ENCODE measurements at regions of chr10 and their contacts with region 1.

Region 1: DNA sequence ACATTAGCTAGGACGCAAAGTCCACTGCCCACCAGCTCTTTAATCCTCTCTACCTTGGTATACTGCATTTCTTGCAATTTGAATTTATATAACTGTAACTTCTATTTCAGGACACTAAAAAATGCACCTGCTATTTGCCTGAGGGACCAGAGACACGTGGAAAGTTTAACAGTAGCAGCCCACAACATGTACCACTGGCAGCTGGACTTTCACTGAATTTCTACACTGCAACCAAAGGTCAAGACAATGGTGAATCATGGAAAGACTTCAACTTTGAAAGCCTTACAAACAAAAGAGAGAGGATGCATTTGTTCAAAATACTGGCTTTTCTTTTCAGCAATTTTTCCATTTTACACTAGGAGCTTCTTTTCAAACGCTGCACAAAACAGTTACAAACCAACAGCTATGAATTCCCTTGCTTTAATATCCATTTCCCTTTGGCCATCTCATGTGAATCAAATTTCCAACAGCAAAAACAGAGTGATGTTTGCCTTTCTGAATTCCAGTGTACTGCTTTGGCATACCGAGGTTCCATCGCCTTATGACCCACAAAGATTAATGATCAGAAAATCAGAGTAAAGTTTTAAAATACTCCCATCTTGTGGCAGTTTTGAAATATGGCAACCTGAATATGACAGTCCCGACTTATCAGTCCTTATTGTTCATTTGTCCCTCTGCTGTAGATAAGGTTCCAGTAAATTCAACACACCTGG is 29.9 kb upstream of the HNRNPH3 start:
- DNase-seq: peak; percentile 63
- H3K4me3 ChIP-seq: no peak overlapping the region
- H3K27ac ChIP-seq: no peak overlapping the region
- H3K4me1 ChIP-seq: peaks cover 3% of the 10 kb centered on the region
- H3K27me3 ChIP-seq: no peaks in the 10 kb centered on the region
- CTCF ChIP-seq: peak; percentile 26 to 36
- POLR2A ChIP-seq: no peak

Region 2: DNA sequence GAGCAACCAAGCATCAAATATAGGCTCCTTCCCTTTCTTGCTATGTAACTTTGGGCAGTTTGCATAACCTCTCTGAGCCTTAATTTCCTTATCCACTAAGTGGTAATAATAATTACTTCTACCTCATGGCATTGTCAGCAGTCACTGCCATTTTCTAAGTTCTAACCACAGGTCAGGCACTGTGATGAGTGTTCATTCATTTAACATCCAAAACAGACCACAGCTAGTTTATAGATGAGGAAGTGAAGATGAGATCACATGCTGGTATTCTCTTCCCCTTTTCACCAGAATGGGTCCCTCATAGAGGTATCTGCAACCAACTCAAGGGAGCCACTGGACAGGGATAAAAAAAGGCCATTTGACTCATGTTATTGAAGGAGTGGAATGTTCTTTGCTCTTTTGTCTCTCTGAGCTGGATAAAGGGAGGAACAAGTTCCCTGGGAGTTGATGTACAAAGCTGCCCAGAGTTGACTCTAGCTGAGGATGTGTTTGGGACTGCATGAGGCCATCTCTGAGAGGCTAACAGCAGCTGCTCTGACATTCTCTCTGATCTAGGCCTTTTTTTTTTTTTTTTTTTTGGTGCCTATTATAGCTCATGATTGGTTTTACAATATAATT is 528.9 kb before region 1 on chr10:
- CTCF ChIA-PET with region 1: no interaction called
- POLR2A ChIA-PET with region 1: no interaction called
- dilution Hi-C with region 1: no loop called
- intact Hi-C with region 1: no loop called
- DNase-seq: no peak
- H3K4me3 ChIP-seq: no peak overlapping the region
- H3K27ac ChIP-seq: no peak overlapping the region
- H3K4me1 ChIP-seq: peaks cover 29% of the 10 kb centered on the region
- H3K27me3 ChIP-seq: no peaks in the 10 kb centered on the region
- CTCF ChIP-seq: no peak
- POLR2A ChIP-seq: no peak

Region 3: DNA sequence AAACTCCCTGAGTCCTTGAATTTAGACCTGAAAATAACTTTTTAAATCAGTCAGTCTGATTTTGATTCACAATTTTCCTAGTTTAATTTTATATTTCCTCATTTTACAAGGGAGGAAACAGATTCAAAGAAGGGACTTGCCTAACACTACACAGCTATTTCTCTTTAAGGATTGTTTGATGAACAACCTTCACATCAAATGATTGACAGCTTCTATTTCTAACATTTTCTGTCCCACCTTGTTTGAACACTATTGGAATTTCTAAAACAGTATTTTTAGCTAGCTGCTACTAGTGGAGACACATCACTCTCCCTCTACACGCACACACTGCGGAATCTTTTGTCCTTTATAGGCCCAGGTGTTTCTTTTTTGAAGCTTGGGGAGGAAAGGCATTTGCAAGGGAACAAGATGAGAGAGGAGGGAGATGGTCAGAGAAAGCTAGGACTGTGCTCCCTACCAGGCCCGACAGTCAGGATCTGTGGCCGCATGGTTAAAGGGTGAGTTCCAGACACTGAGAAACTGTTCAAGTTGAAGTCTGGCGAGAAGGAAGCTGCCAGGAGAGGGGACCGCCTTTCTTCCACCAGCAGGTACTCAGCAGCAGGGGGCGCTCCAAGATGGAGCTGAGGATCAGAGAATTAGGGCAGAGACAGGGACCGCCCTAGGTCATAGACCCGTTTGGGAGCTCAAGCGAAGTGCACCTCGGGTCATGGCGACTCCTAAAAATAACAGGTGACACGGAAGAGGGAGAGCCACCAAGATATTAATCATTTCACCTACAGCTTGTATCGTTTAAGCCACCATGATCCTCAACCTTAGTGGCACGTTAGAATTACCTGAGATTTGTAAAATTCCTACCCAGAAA is 513.7 kb before region 1 on chr10:
- CTCF ChIA-PET with region 1: interaction called, 98 read pairs
- POLR2A ChIA-PET with region 1: no interaction called
- dilution Hi-C with region 1: no loop called
- intact Hi-C with region 1: loop called (anchors 1 kb)
- DNase-seq: peak; percentile 26
- H3K4me3 ChIP-seq: no peak overlapping the region
- H3K27ac ChIP-seq: no peak overlapping the region
- H3K4me1 ChIP-seq: no peaks in the 10 kb centered on the region
- H3K27me3 ChIP-seq: peaks cover 0 to 5% of the 10 kb centered on the region in 2 experiments
- CTCF ChIP-seq: peak; percentile 72 to 77
- POLR2A ChIP-seq: no peak

Region 4: GRCh38 chr10:68082872-68083271 is 219.1 kb before region 1 on chr10:
- CTCF ChIA-PET with region 1: interaction called, 26 read pairs
- POLR2A ChIA-PET with region 1: no interaction called
- dilution Hi-C with region 1: no loop called
- intact Hi-C with region 1: loop called (anchors 5 kb)
- DNase-seq: peak; percentile 52
- H3K4me3 ChIP-seq: no peak overlapping the region
- H3K27ac ChIP-seq: no peak overlapping the region
- H3K4me1 ChIP-seq: peaks cover 6% of the 10 kb centered on the region
- H3K27me3 ChIP-seq: no peaks in the 10 kb centered on the region
- CTCF ChIP-seq: peak in 1 of 2 donors; percentile 22
- POLR2A ChIP-seq: no peak

Region 5: DNA sequence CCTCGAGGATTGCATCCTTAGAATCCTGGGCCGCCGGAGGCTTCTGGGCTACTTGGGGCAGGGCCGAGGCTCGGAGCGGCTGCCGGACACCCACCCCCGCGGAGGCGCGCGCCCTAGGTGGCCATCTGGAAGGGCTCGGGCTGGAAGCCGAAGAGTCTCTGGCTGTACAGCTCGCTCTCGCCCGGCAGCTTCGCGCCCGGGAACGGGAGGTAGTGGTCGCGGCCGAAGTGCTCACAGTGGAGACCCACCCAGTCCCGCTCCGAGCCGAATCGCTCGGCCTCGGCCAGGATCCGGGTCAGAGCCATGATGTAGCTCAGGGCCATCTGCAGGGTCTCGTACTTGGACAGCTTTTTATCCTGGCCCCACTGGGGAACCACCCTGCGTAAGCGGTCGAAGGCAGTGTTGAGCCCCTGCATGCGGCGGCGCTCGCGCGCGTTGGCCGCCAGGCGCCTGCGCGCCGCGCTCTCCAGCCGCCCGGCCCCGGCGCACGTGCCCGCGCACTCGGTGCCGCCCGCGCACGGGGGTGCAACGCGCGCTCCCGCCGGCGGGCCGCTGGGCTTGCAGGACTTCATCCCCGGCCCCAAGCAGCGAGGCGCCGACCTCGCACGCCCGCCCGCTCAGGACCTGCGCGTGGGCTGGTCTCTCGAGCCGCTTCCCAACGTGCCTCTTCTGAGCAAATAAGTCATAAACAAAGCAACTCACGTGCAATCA is 70.7 kb before region 1 on chr10:
- CTCF ChIA-PET with region 1: interaction called, 13 read pairs
- POLR2A ChIA-PET with region 1: no interaction called
- dilution Hi-C with region 1: no loop called
- intact Hi-C with region 1: no loop called
- DNase-seq: peak; percentile 81
- H3K4me3 ChIP-seq: peak overlapping the region; percentile 37 to 72 (median 58)
- H3K27ac ChIP-seq: no peak overlapping the region
- H3K4me1 ChIP-seq: peaks cover 12% of the 10 kb centered on the region
- H3K27me3 ChIP-seq: peaks cover 25 to 29% of the 10 kb centered on the region in 2 experiments
- CTCF ChIP-seq: peak; percentile 5 to 45
- POLR2A ChIP-seq: no peak

Region 6: DNA sequence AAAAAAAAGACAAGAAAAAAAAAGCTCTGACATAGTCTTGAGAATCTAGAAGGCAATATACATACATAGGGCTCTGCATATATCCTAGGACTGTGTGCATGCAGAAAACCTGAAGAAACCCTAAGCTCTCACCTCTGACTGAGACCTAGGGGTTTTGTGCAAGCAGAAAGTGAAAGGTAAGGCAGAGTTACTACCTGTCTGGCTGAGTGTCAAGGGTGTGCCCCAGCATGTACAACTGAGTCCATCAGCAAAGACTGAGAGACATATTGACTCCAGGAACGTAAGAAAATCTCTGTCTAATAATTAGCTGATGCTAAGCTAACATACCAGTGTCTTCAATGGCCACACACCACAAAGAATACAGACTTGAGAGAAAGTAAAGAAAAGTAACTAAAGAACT is 13.6 kb after region 1 on chr10:
- CTCF ChIA-PET with region 1: interaction called, 12 read pairs
- POLR2A ChIA-PET with region 1: no interaction called
- dilution Hi-C with region 1: no loop called
- intact Hi-C with region 1: no loop called
- DNase-seq: no peak
- H3K4me3 ChIP-seq: no peak overlapping the region
- H3K27ac ChIP-seq: no peak overlapping the region
- H3K4me1 ChIP-seq: no peaks in the 10 kb centered on the region
- H3K27me3 ChIP-seq: no peaks in the 10 kb centered on the region
- CTCF ChIP-seq: no peak
- POLR2A ChIP-seq: no peak